ENCODE measurements at regions of chr4 and their contacts with region 1.

Region 1: GRCh38 chr4:52911684-52912294 is 49.7 kb downstream of the RASL11B start:
- DNase-seq: peak; percentile 85
- H3K4me3 Mint-ChIP-seq: no peak overlapping the region
- H3K27ac Mint-ChIP-seq: no peak overlapping the region
- H3K4me1 Mint-ChIP-seq: peaks cover 5% of the 10 kb centered on the region
- H3K27me3 Mint-ChIP-seq: no peaks in the 10 kb centered on the region

Region 2: DNA sequence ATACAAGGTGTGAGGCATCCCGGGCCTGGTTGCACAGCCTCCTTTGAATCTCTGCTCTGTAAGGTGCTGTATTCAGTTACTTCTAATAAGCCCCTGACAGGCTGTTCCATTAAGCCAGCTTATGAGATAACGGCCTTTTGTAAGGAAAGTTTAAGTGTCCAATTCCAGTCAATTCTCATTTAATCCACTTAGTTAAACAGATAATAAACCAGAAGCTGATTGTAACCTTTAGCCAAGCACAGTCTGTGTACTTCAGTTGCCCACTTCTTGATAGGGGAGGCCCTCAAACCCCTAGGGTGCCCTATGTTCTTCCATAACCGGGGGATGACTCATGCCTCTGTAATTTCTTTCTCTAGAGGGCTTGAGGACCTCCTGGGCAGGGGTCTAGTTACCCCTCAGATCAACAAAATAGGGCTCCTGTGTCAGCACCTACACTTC is 13.8 kb after region 1 on chr4:
- CTCF ChIA-PET with region 1: interaction called, 11 read pairs
- intact Hi-C with region 1: no loop called
- DNase-seq: no peak
- H3K4me3 Mint-ChIP-seq: no peak overlapping the region
- H3K27ac Mint-ChIP-seq: no peak overlapping the region
- H3K4me1 Mint-ChIP-seq: no peaks in the 10 kb centered on the region
- H3K27me3 Mint-ChIP-seq: no peaks in the 10 kb centered on the region